PC-9 (cell line): ENCODE measurements at regions of chr7 and their contacts with region 1.

Region 1: GRCh38 chr7:2070151-2070763 is 162.5 kb downstream of the MAD1L1 start:
- DNase-seq: no peak
- H3K4me3 ChIP-seq: no peak overlapping the region
- H3K27ac ChIP-seq: no peak overlapping the region
- H3K4me1 ChIP-seq: no peaks in the 10 kb centered on the region
- H3K27me3 ChIP-seq: no peaks in the 10 kb centered on the region
- CTCF ChIP-seq: no peak

Region 2: DNA sequence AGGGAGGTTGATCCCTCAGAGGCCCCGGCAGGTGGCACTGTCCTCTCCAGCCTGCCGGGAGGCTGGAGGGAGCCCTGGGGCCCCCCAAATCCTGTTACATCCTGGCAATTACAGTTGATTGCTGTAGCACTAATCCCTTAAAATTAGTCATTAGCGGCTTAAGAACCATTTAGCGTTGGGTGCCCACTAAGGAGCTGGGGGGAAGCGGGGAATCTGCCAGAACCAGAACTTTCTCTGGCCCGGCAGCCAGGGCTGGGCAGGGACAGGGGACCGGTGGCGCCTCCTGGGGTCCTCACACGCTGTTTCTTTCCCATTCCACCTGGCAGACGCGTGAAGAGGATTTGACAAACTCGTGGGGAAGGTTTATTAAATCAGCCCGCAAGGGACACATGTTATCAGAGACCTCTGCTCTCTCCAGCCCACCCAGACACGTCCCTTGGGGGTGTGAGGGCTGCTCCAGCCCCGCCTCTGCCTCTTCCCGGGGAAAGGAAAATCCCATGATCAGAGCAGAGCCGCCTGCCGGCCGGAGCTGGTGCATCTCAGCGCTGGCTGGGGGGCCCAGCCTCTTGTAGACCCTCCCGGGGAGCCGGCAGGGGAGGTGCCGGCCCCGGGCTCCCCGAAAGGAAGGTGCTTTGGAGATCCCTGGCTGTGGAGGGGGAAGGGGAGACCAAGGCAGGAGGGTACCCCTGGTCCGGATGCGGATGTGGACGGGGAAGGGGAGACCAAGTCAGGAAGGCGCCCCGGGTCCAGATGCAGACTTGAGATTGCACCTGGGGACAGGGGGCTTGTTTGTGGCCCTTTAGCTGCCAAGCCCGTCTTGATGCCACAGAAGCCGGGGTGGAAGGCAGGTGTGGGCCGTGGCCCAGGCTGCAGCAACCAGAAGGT is 257.5 kb before region 1 on chr7:
- CTCF ChIA-PET with region 1: no interaction called
- POLR2A ChIA-PET with region 1: no interaction called
- intact Hi-C with region 1: no loop called
- DNase-seq: no peak
- H3K4me3 ChIP-seq: no peak overlapping the region
- H3K27ac ChIP-seq: no peak overlapping the region
- H3K4me1 ChIP-seq: no peaks in the 10 kb centered on the region
- H3K27me3 ChIP-seq: no peaks in the 10 kb centered on the region
- CTCF ChIP-seq: peak; percentile 37

Region 3: DNA sequence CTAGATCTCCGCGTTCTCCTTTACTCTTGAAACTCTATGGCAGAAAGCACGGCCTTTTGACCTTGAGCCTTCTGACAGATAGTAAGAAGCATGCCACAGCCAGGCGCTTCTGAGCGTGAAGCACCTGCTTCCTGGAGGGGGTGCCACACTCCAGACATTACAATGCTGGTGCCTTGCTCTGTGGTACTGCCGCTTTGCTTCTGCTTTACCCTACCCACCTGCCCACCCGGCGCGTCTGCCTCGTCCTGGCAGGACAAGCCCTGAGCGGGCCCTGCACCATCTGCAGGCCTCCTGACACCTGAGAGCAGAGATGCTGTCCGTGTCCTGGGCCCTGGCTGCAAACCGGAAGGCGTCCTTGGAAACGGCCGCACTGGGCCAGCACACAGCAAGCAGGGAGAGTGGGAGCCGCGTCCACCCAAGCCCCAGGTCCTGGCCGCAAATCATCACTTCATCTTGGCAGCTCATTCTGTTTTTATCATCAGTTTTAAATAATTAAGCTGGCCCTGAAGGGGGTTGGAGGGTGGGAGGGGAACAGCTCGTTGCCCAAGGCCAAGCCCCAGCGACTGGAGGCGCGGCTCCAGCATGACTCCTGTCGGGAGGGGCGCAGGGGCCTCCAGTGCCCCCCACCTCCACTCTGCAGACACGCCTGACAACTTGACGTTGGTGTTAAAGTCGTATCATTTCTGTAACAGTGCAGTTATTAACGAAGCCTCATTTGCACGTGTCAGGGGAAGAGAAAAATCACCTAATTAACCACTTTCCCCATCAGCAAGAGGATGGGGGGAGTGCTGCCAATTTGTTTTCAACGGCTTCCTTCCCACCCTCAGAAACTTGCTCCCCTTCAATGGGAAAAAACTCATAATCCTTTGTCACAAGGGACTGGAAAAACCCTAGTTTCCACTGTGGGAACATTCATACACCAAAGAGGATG is 30.3 kb after region 1 on chr7:
- CTCF ChIA-PET with region 1: no interaction called
- POLR2A ChIA-PET with region 1: interaction called, 15 read pairs
- intact Hi-C with region 1: no loop called
- DNase-seq: no peak
- H3K4me3 ChIP-seq: no peak overlapping the region
- H3K27ac ChIP-seq: no peak overlapping the region
- H3K4me1 ChIP-seq: no peaks in the 10 kb centered on the region
- H3K27me3 ChIP-seq: no peaks in the 10 kb centered on the region
- CTCF ChIP-seq: no peak